Activated T-helper 2 cell treated with anti-CD3 and anti-CD28 coated beads, Interferon-gamma antibody, Interleukin-2, Interleukin-4, amounts not matched to agents 10 μg/mL and 5 μg/mL and 100 μg/mL, durations not matched to agents 14 hours and 24 hours and 36 hours (primary cell): ENCODE measurements at regions of chr2 and their contacts with region 1.

Region 1: DNA sequence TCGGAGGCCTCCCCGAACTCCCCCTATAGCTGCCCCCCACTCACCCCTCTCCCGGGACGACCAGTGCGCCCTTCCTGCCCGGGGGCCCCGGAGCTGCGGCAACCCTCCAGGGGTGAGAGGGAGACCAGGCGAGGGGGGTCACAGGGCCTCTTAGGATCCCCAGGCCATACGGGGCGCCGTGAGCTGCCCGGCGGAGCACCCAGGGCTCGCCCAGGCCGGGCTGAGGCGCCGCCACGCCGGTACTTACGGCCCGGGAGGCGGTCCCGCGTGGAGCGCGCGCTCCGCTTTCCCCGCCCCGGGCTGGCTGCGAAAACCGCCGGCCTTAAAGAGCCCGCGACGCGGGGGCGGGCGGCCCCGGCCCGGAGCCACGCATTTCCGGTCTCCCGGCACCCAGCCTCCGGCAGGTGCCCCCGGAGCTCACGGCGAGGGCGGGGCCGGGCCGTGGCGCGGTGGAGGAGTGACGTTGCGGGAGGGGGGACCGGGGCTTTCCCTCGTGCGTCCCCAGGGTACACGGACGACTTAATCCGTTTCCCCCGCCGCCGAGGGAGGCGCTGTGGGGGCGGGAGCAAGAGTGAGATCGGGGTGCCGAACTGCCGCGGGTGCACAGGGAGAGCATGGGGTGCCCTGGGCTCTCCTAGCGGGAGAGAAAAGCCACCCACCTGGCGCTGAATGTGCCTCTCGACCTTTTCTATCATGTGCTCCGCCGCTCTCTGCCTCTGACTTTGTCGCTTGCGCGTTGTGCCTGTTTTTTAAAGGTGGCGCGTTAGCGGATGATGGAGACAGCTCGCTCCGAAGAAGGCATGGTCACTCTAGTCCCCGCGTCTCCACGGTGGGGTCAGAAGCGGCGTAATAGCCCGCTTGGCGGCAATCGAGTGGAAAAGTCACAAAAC is at the start of gene METTL21A:
- DNase-seq: peak; percentile 93
- H3K4me3 Mint-ChIP-seq: peak within 1 kb of the TSS; percentile 92
- H3K27ac Mint-ChIP-seq: peak within 1 kb of the TSS; percentile 98
- H3K4me1 Mint-ChIP-seq: peaks cover 37% of the 10 kb centered on the region
- H3K27me3 Mint-ChIP-seq: no peaks in the 10 kb centered on the region
- total RNA-seq, gene METTL21A: 32.1 and 35.1 TPM in 2 replicates

Region 2: DNA sequence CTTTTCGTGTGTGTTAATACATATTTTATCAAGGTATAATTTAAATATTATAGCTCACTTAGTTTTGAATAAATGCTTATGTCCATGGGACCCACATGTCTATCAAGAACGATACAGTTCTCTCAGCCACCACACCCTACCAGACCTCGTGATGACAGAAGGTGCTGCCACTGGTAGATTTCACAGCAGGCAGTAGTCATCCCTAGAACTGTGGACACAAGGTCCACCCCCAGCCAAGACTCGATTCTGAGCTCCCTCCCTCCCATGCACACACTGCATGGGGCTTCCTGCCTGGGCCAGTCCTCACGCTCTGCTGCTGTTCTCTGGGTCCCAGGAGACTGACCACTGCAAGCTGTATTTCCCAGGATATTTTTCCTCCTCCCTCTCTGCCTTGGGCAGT is 122.0 kb before region 1 on chr2:
- intact Hi-C with region 1: loop called (anchors 2 kb)
- DNase-seq: no peak
- H3K4me3 Mint-ChIP-seq: no peak overlapping the region
- H3K27ac Mint-ChIP-seq: no peak overlapping the region
- H3K4me1 Mint-ChIP-seq: peaks cover 67% of the 10 kb centered on the region
- H3K27me3 Mint-ChIP-seq: no peaks in the 10 kb centered on the region

Region 3: GRCh38 chr2:207769597-207770486 is 144.6 kb after region 1 on chr2 and contains the start of gene FZD5:
- intact Hi-C with region 1: loop called (anchors 2 kb)
- DNase-seq: peak; percentile 76
- H3K4me3 Mint-ChIP-seq: peak within 1 kb of the TSS; percentile 83
- H3K27ac Mint-ChIP-seq: peak within 1 kb of the TSS; percentile 46
- H3K4me1 Mint-ChIP-seq: peaks cover 23% of the 10 kb centered on the region
- H3K27me3 Mint-ChIP-seq: peaks cover 58% of the 10 kb centered on the region
- total RNA-seq, gene FZD5: 1.7 TPM in 2 replicates

Region 4: GRCh38 chr2:208040199-208041171 is 415.2 kb after region 1 on chr2:
- intact Hi-C with region 1: loop called (anchors 5 kb)
- DNase-seq: peak; percentile 51
- H3K4me3 Mint-ChIP-seq: no peak overlapping the region
- H3K27ac Mint-ChIP-seq: no peak overlapping the region
- H3K4me1 Mint-ChIP-seq: peaks cover 3% of the 10 kb centered on the region
- H3K27me3 Mint-ChIP-seq: peaks cover 21% of the 10 kb centered on the region